Posterior vena cava (tissue), 2 donors: ENCODE measurements at regions of chr20 and their contacts with region 1.

Region 1: DNA sequence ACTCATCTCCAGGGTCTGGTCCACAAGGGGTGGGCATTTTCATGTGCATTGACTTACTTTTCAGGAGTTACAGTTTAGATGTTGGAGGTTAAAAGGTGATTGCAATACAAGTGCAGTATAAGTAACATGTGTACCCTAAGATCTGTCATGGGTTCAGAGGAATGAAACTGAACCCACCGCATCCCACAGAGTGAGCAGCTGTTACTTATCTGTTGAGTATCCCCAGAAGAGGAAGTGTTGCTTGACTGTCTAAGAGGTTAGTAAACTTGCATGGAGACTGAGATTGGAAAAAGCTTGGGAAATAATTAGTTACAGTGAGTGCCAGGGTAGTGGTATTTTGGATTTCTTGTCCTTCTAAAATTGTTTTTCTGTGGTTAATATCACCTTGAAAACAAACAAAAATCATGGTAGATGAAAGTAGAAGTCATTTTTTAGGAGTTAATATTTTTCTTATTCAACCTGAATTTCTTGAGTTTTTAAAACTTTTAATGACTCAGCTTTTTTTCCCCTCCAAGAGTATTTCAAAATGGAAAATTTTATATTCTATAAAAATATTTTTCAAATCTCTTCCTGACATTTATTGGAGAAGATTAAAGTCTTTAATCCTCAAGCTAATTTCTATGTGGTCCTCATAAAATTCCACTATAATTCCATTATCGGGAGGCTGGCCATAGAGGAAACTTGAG is 306.1 kb downstream of the ZNF217 start:
- DNase-seq: no peak

Region 2: GRCh38 chr20:51608061-51608460 is 1679.4 kb before region 1 on chr20:
- intact Hi-C with region 1: no loop called
- DNase-seq: no peak

Region 3: GRCh38 chr20:54350415-54350814 is 1062.9 kb after region 1 on chr20:
- intact Hi-C with region 1: loop called in 1 of 2 experiments (anchors 5 kb)
- DNase-seq: no peak